Endothelial cell of umbilical vein (primary cell): ENCODE measurements at regions of chr9 and their contacts with region 1.

Region 1: GRCh38 chr9:33737811-33738606 is 57.4 kb upstream of the PRSS3 start:
- DNase-seq: peak; percentile 62
- H3K4me3 ChIP-seq: no peak overlapping the region
- H3K27ac ChIP-seq: no peak overlapping the region
- H3K4me1 ChIP-seq: no peaks in the 10 kb centered on the region
- H3K27me3 ChIP-seq: no peaks in the 10 kb centered on the region
- CTCF ChIP-seq: peak; percentile 68 to 74
- POLR2A ChIP-seq: no peak

Region 2: GRCh38 chr9:33649463-33649862 is 88.5 kb before region 1 on chr9:
- CTCF ChIA-PET with region 1: no interaction called
- POLR2A ChIA-PET with region 1: no interaction called
- dilution Hi-C with region 1: no loop called
- intact Hi-C with region 1: no loop called
- DNase-seq: no peak
- H3K4me3 ChIP-seq: no peak overlapping the region
- H3K27ac ChIP-seq: no peak overlapping the region
- H3K4me1 ChIP-seq: no peaks in the 10 kb centered on the region
- H3K27me3 ChIP-seq: peaks cover 29 to 44% of the 10 kb centered on the region in 2 experiments
- CTCF ChIP-seq: no peak
- POLR2A ChIP-seq: no peak

Region 3: DNA sequence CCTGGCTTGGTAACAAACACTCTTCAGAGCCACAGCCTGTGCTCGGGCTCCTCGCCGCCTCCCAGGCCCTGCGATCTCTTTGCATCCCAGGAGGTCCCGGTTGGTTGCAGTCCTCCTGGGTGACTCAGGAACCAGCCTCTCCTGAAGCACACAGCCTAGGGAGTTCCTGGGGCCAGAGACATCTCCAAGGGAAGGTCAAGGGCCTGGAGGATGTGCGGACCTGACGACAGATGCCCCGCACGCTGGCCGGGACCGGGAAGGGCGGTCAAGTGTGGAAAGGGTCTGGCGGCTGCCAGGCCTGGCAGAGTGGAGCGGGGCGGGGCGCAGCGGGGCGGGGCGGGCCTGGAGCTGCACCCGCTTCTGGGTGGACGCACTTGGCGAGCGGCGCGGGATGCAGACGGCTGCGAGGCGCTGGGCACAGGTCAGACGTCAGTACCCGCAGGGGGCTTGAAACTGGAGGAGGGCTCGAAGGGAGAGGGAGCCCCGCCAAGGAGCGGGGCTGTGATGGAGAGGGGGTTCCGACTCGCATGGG is 12.4 kb after region 1 on chr9:
- CTCF ChIA-PET with region 1: interaction called, 21 read pairs
- POLR2A ChIA-PET with region 1: no interaction called
- dilution Hi-C with region 1: no loop called
- intact Hi-C with region 1: no loop called
- DNase-seq: no peak
- H3K4me3 ChIP-seq: peak overlapping the region; percentile 32 to 94 (median 56)
- H3K27ac ChIP-seq: no peak overlapping the region
- H3K4me1 ChIP-seq: peaks cover 8% of the 10 kb centered on the region
- H3K27me3 ChIP-seq: peaks cover 0 to 5% of the 10 kb centered on the region in 2 experiments
- CTCF ChIP-seq: no peak
- POLR2A ChIP-seq: no peak

Region 4: DNA sequence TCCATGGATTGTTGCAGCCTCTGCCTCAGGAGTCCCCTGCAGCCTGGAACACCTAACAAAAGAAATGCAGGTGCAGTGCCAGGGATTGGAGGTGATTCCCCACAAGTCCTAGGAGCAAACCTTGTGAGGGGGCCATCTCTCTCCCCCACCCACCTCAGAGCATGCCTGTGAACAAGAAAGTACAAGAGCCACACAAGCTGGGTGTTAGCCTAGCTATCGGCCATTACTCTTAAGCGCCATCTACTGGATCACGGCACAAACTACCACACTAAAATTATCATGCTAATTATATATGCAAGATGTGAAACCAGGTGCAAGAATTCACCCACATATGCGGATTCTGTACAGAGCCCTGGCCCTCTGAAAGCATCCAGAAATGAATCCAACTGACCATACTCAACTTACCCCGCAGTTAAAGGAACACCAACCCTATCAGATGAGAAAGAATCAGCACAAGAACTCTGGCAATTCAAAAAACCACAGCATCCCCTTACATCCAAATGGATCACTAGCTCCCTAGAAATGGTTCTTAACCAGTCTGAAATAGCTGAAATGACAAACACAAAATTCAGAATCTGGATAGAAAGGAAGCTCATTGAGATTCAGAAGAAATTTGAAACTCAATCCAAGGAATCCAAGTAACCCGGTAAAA is 40.8 kb after region 1 on chr9:
- CTCF ChIA-PET with region 1: interaction called, 162 read pairs
- POLR2A ChIA-PET with region 1: no interaction called
- dilution Hi-C with region 1: no loop called
- intact Hi-C with region 1: loop called (anchors 1 kb)
- DNase-seq: peak; percentile 73
- H3K4me3 ChIP-seq: no peak overlapping the region
- H3K27ac ChIP-seq: no peak overlapping the region
- H3K4me1 ChIP-seq: no peaks in the 10 kb centered on the region
- H3K27me3 ChIP-seq: no peaks in the 10 kb centered on the region
- CTCF ChIP-seq: peak; percentile 72 to 80
- POLR2A ChIP-seq: no peak

Region 5: GRCh38 chr9:33809506-33809905 is 71.5 kb after region 1 on chr9:
- CTCF ChIA-PET with region 1: interaction called, 47 read pairs
- POLR2A ChIA-PET with region 1: no interaction called
- dilution Hi-C with region 1: no loop called
- intact Hi-C with region 1: no loop called
- DNase-seq: no peak
- H3K4me3 ChIP-seq: no peak overlapping the region
- H3K27ac ChIP-seq: no peak overlapping the region
- H3K4me1 ChIP-seq: peaks cover 10% of the 10 kb centered on the region
- H3K27me3 ChIP-seq: no peaks in the 10 kb centered on the region
- CTCF ChIP-seq: no peak
- POLR2A ChIP-seq: no peak

Region 6: GRCh38 chr9:33852216-33852826 is 114.3 kb after region 1 on chr9:
- CTCF ChIA-PET with region 1: interaction called, 39 read pairs
- POLR2A ChIA-PET with region 1: no interaction called
- dilution Hi-C with region 1: no loop called
- intact Hi-C with region 1: loop called (anchors 1 kb)
- DNase-seq: peak; percentile 77
- H3K4me3 ChIP-seq: no peak overlapping the region
- H3K27ac ChIP-seq: no peak overlapping the region
- H3K4me1 ChIP-seq: peaks cover 22% of the 10 kb centered on the region
- H3K27me3 ChIP-seq: no peaks in the 10 kb centered on the region
- CTCF ChIP-seq: peak; percentile 33 to 45
- POLR2A ChIP-seq: no peak

Region 7: GRCh38 chr9:33919276-33919897 is 181.4 kb after region 1 on chr9:
- CTCF ChIA-PET with region 1: interaction called, 13 read pairs
- POLR2A ChIA-PET with region 1: no interaction called
- dilution Hi-C with region 1: no loop called
- intact Hi-C with region 1: loop called (anchors 5 kb)
- DNase-seq: no peak
- H3K4me3 ChIP-seq: no peak overlapping the region
- H3K27ac ChIP-seq: no peak overlapping the region
- H3K4me1 ChIP-seq: no peaks in the 10 kb centered on the region
- H3K27me3 ChIP-seq: no peaks in the 10 kb centered on the region
- CTCF ChIP-seq: no peak
- POLR2A ChIP-seq: no peak

Region 8: GRCh38 chr9:33924978-33925797 is 187.2 kb after region 1 on chr9:
- CTCF ChIA-PET with region 1: interaction called, 13 read pairs
- POLR2A ChIA-PET with region 1: no interaction called
- dilution Hi-C with region 1: no loop called
- intact Hi-C with region 1: loop called (anchors 5 kb)
- DNase-seq: peak; percentile 61
- H3K4me3 ChIP-seq: no peak overlapping the region
- H3K27ac ChIP-seq: no peak overlapping the region
- H3K4me1 ChIP-seq: no peaks in the 10 kb centered on the region
- H3K27me3 ChIP-seq: no peaks in the 10 kb centered on the region
- CTCF ChIP-seq: peak; percentile 70 to 79
- POLR2A ChIP-seq: no peak

Region 9: DNA sequence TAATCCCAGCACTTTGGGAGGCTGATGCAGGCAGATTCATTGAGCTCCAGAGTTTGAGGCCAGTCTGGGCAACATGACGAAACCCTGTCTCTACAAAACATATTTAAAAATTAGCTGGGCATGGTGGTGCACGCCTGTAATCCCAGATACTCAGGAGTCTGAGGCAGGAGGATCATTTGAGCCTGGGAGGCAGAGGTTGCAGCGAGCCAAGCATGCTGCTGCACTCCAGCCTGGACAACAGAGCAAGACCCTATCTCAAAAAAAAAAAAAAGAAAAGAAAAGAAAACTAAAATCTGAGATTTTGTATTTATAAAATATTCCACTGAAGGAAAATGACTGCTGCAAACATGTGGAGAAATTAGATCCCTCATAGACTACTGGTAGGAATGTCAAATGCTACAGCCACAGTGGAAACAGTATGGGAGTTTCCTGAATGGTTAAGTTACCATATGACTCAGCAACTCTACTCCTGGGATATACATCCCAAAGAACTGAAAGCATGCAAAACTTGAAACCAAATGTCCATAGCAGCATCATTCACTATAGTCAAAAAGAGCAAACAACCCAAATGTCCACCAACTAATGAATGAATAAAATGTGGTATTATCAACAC is 204.6 kb after region 1 on chr9:
- CTCF ChIA-PET with region 1: no interaction called
- POLR2A ChIA-PET with region 1: no interaction called
- dilution Hi-C with region 1: no loop called
- intact Hi-C with region 1: no loop called
- DNase-seq: peak; percentile 71
- H3K4me3 ChIP-seq: no peak overlapping the region
- H3K27ac ChIP-seq: peak overlapping the region; percentile 56
- H3K4me1 ChIP-seq: peaks cover 19% of the 10 kb centered on the region
- H3K27me3 ChIP-seq: no peaks in the 10 kb centered on the region
- CTCF ChIP-seq: peak in 1 of 2 donors; percentile 14
- POLR2A ChIP-seq: no peak

Region 10: GRCh38 chr9:34032631-34033030 is 294.6 kb after region 1 on chr9:
- CTCF ChIA-PET with region 1: no interaction called
- POLR2A ChIA-PET with region 1: no interaction called
- dilution Hi-C with region 1: no loop called
- intact Hi-C with region 1: no loop called
- DNase-seq: no peak
- H3K4me3 ChIP-seq: no peak overlapping the region
- H3K27ac ChIP-seq: no peak overlapping the region
- H3K4me1 ChIP-seq: no peaks in the 10 kb centered on the region
- H3K27me3 ChIP-seq: no peaks in the 10 kb centered on the region
- CTCF ChIP-seq: no peak
- POLR2A ChIP-seq: no peak

Region 11: DNA sequence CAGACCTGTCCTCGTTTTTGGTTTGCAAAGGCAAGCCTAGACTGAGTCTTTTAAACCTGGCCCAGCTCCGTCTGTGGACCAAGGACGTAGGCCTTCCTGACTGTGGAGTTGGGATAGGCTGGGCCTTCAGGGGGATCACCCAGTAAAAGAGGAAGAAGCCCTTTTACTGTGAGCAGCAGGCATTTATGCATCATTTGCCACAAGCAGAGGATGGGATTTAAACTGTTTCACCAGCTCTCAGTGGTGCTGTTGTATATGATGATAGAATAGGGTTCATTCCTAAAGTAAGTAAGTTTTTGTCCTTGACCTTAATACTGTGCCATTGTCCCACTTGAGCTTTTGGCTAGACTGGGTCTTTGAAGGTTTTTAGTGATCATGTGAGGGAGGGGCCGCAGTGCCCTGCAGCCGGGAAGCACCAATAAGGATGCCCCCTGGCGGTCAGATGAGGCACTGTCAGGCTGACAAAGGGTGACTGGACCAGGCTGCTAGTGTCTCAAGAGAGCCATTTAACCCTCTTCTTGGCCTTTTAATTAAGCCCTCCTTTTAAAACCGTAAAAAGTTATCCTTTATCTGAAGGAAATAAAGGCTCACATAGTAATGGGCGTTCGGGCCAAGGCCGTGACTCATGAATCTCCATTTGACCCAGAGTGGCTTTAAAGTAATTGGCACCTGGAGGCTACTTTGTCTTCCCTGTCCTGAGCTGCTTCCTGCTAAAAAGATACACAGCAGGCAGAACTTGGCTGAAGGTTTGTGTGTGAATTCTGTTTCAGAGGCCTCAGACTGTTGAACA is 514.9 kb after region 1 on chr9:
- CTCF ChIA-PET with region 1: no interaction called
- POLR2A ChIA-PET with region 1: no interaction called
- dilution Hi-C with region 1: no loop called
- intact Hi-C with region 1: no loop called
- DNase-seq: peak; percentile 52
- H3K4me3 ChIP-seq: no peak overlapping the region
- H3K27ac ChIP-seq: no peak overlapping the region
- H3K4me1 ChIP-seq: no peaks in the 10 kb centered on the region
- H3K27me3 ChIP-seq: no peaks in the 10 kb centered on the region
- CTCF ChIP-seq: peak; percentile 80 to 83
- POLR2A ChIP-seq: no peak